Activated CD8-positive, alpha-beta T cell treated with anti-CD3 and anti-CD28 coated beads for 36 hours (primary cell): ENCODE measurements at regions of chr14 and their contacts with region 1.

Region 1: GRCh38 chr14:93959239-93960107 is 16.9 kb downstream of the ASB2 start:
- DNase-seq: peak; percentile 98
- ATAC-seq: peak; percentile 69
- H3K4me3 Mint-ChIP-seq: peak overlapping the region; percentile 66
- H3K27ac Mint-ChIP-seq: peak overlapping the region; percentile 99
- H3K4me1 Mint-ChIP-seq: peaks cover 93% of the 10 kb centered on the region
- H3K27me3 Mint-ChIP-seq: no peaks in the 10 kb centered on the region
- CTCF ChIP-seq: no peak

Region 2: DNA sequence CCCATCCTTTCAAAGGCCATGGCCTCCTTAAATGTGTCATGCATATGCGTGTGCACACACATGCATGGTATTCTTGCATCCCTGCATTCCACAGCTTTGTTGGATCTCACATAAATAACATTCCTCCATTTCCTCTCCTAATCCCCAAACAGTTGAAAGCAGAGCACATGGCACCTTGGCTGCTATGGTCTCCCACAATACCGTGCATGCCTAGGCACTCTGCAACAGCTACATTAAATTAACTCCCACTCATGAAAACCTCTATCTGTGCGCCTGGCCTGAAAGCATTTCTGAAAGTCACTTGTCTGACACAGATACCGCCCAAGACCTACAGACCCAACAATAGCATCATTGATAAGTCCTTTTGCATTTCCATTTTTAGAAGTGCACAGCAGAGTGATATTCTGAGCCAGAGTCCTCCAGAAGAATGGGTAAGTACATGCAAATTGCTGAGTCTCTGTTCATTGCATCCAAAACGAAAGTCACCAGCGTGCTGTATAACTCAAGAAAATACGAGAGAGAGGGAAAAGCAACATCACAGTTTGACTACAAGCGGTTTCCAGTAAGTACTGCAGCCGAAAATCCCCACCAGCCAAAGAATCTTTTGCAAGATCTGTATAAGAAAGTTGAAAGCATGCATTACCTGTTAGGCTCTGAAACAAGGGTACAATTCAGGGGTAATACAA is 16.5 kb after region 1 on chr14:
- CTCF ChIA-PET with region 1: interaction called, 69 read pairs
- POLR2A ChIA-PET with region 1: interaction called, 180 read pairs
- intact Hi-C with region 1: loop called (anchors 2 kb)
- DNase-seq: no peak
- ATAC-seq: peak; percentile 8
- H3K4me3 Mint-ChIP-seq: peak overlapping the region; percentile 45
- H3K27ac Mint-ChIP-seq: peak overlapping the region; percentile 91
- H3K4me1 Mint-ChIP-seq: peaks cover 81% of the 10 kb centered on the region
- H3K27me3 Mint-ChIP-seq: no peaks in the 10 kb centered on the region
- CTCF ChIP-seq: no peak

Region 3: DNA sequence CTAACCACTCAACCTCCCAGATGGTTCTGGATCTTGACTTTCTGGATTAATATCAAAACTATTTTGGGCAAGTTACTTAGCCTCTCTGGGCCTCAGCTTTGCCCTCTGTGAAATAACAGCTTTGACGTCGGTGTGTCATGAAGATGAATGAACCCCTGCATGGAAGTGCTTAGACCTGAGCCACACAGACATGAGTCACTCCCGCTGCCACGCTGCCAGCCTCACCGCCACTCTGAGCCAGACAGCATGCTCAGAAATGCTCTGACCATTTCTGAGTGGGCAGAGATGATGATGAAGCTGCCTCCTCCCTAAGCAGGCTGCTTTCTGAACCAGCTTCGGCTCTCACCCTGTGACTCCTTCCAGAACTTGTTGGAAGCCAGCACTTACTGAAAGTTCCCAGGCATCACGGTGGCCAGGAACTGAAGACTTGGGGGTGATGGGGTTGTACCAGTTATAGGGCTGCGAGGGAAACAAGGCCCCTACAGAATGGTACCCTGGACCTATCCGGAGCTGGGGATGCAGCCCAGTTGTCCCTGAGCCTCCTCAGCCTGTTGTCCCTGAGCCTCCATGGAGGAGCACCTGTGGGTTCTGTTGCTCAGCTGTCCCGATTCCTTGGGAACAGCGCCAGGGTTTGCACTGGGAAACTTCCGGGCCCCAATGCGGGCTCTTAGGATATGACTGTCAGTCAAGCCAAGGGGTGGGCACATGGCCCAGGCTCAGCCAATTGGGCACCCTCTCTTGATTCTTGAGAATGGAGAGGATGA is 35.6 kb after region 1 on chr14:
- CTCF ChIA-PET with region 1: interaction called, 16 read pairs
- POLR2A ChIA-PET with region 1: interaction called, 19 read pairs
- intact Hi-C with region 1: no loop called
- DNase-seq: peak; percentile 84
- ATAC-seq: peak; percentile 92
- H3K4me3 Mint-ChIP-seq: no peak overlapping the region
- H3K27ac Mint-ChIP-seq: peak overlapping the region; percentile 71
- H3K4me1 Mint-ChIP-seq: peaks cover 34% of the 10 kb centered on the region
- H3K27me3 Mint-ChIP-seq: peaks cover 2% of the 10 kb centered on the region
- CTCF ChIP-seq: no peak